CD8-positive, alpha-beta T cell (primary cell): ENCODE measurements at regions of chr22 and their contacts with region 1.

Region 1: DNA sequence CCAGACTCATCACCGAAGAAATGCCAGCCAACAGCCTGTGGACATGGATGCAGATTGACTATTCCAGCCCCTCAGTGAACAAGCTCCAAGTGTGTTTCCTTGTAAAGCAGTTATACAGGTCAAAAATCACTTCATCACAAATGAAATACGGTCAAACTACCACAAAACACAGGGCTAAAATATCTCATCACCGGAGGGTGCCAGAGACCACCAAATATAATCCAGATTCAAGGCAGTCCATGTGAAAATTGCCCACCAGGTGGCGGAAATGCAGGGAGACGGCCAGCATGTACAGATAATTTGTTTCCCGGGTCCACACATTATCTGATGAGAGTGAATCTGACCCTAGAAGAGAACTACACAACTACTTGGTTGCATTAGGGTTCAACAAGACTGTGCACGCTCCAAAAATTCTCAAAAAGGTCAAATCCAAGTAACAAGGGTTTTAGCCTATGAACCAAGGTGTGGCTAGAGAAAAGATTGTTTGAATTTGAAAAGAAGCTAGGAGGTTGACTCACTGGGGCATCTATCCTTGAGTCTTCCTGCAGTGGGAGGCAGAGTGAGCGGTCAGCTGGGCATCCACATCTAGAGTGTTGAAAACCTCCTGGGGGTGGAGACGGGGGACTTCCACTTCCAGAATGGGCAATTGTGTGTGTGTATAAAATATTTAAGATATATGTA is 71.7 kb downstream of the IGLL5 start:
- DNase-seq: peak; percentile 48 to 89 (median 80)
- ATAC-seq: peak; percentile 60
- H3K4me3 ChIP-seq: no peak overlapping the region
- H3K4me3 Mint-ChIP-seq: no peak overlapping the region
- H3K27ac ChIP-seq: no peak overlapping the region
- H3K27ac Mint-ChIP-seq: no peak overlapping the region
- H3K4me1 ChIP-seq: no peaks in the 10 kb centered on the region
- H3K4me1 Mint-ChIP-seq: peaks cover 5% of the 10 kb centered on the region
- H3K27me3 ChIP-seq: no peaks in the 10 kb centered on the region
- H3K27me3 Mint-ChIP-seq: peaks cover 10% of the 10 kb centered on the region
- CTCF ChIP-seq: peak; percentile 98

Region 2: DNA sequence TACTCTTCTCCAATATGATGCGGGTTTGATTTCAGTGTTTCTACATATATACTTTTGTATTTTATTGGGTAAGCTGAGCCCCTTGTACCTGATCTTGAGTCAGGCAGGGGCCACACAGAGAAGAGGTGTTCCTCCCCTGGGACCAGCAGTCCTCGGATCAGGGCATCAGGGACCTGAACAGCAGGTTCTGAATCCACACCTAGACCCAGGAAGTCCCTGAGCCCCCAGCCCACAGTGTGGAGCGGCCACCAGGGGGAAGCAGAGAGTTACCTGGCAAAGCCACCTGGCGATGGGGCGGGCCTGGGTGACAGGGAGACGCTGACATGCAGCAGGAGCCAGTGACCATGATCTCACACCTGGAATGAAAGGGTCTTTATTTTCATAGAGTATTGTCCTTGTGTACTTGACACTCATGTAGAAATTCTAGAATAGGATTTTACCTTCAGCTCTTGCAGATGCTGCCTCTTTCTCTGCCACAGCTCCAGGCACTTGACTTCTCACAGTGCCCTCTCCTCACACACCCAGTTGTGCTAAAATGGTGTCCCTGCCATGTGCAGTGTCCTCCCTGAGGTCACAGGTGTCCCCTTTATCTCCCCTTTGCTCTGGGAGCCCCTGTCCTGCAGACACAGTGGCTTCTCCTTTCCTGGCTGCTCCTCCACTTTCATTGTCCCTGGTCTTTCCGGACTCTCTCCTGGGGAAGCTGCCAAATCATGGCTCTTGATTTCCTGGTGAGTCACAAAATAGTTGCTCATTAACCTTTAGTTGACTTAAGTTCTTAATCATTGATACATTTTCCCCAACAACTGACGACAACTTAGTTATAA is 266.4 kb before region 1 on chr22:
- CTCF ChIA-PET with region 1: interaction called, 47 read pairs
- POLR2A ChIA-PET with region 1: no interaction called
- intact Hi-C with region 1: loop called (anchors 1 to 5 kb)
- DNase-seq: peak; percentile 43 to 79 (median 70)
- ATAC-seq: peak; percentile 78
- H3K4me3 ChIP-seq: no peak overlapping the region
- H3K4me3 Mint-ChIP-seq: no peak overlapping the region
- H3K27ac ChIP-seq: no peak overlapping the region
- H3K27ac Mint-ChIP-seq: no peak overlapping the region
- H3K4me1 ChIP-seq: no peaks in the 10 kb centered on the region
- H3K4me1 Mint-ChIP-seq: no peaks in the 10 kb centered on the region
- H3K27me3 ChIP-seq: no peaks in the 10 kb centered on the region
- H3K27me3 Mint-ChIP-seq: no peaks in the 10 kb centered on the region
- CTCF ChIP-seq: peak; percentile 75

Region 3: GRCh38 chr22:22753526-22754267 is 205.6 kb before region 1 on chr22:
- CTCF ChIA-PET with region 1: interaction called, 56 read pairs
- POLR2A ChIA-PET with region 1: no interaction called
- intact Hi-C with region 1: loop called in 1 of 2 experiments (anchors 1 kb)
- DNase-seq: peak; percentile 63 to 90 (median 83)
- ATAC-seq: peak; percentile 85
- H3K4me3 ChIP-seq: peak overlapping the region in 1 of 2 experiments; percentile 25
- H3K4me3 Mint-ChIP-seq: peak overlapping the region; percentile 60
- H3K27ac ChIP-seq: peak overlapping the region; percentile 44 to 69
- H3K27ac Mint-ChIP-seq: peak overlapping the region; percentile 94
- H3K4me1 ChIP-seq: peaks cover 44% of the 10 kb centered on the region
- H3K4me1 Mint-ChIP-seq: peaks cover 66% of the 10 kb centered on the region
- H3K27me3 ChIP-seq: no peaks in the 10 kb centered on the region
- H3K27me3 Mint-ChIP-seq: no peaks in the 10 kb centered on the region
- CTCF ChIP-seq: peak; percentile 70

Region 4: GRCh38 chr22:22884010-22884887 is 75.0 kb before region 1 on chr22:
- CTCF ChIA-PET with region 1: interaction called, 30 read pairs
- POLR2A ChIA-PET with region 1: no interaction called
- intact Hi-C with region 1: loop called in 1 of 2 experiments (anchors 5 kb)
- DNase-seq: peak; percentile 46 to 86 (median 67)
- ATAC-seq: peak; percentile 78
- H3K4me3 ChIP-seq: no peak overlapping the region
- H3K4me3 Mint-ChIP-seq: no peak overlapping the region
- H3K27ac ChIP-seq: no peak overlapping the region
- H3K27ac Mint-ChIP-seq: no peak overlapping the region
- H3K4me1 ChIP-seq: no peaks in the 10 kb centered on the region
- H3K4me1 Mint-ChIP-seq: no peaks in the 10 kb centered on the region
- H3K27me3 ChIP-seq: no peaks in the 10 kb centered on the region
- H3K27me3 Mint-ChIP-seq: no peaks in the 10 kb centered on the region
- CTCF ChIP-seq: peak; percentile 93

Region 5: DNA sequence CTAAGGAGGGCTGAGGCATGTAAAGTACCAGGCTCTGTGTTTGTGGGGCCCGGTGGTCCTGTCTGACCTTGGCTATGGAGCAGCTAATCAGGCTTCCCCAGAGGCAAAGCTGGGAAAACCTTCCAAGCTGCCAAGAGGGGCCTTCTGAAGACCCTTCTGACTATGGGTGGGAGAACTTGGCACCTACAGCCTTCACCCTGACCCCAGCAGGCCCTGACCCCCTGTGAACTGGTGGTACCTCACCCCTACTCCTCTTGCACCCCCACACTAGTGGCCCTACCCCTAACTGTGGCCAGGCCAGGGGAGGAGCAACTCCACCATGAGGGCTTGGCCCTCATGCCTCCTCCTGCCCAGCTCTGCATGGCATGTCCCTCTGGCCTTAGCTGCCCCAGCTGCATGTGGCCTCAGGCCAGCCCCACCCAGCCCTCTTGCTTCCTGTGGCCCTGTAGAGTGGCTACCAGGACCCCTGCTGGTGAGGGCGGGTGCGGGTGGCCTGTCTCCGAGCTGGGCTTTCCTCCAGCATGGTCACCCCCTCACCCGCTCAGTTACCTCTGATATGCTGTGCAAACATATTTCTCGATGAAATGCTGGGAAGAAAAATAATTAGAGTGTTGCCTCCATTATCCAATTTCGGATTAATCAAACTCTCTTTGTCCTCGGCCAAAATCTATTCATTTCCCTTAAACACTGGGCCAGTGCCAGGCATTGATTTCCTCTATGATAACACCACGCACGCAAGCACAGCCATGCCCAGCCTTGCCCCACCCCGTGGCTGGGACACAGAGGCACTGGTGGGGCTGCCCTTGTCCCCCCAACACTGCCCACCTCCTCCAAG is 118.6 kb after region 1 on chr22:
- CTCF ChIA-PET with region 1: no interaction called
- POLR2A ChIA-PET with region 1: no interaction called
- intact Hi-C with region 1: no loop called
- DNase-seq: no peak
- ATAC-seq: no peak
- H3K4me3 ChIP-seq: no peak overlapping the region
- H3K4me3 Mint-ChIP-seq: no peak overlapping the region
- H3K27ac ChIP-seq: no peak overlapping the region
- H3K27ac Mint-ChIP-seq: no peak overlapping the region
- H3K4me1 ChIP-seq: no peaks in the 10 kb centered on the region
- H3K4me1 Mint-ChIP-seq: no peaks in the 10 kb centered on the region
- H3K27me3 ChIP-seq: no peaks in the 10 kb centered on the region
- H3K27me3 Mint-ChIP-seq: peaks cover 20% of the 10 kb centered on the region
- CTCF ChIP-seq: no peak

Region 6: DNA sequence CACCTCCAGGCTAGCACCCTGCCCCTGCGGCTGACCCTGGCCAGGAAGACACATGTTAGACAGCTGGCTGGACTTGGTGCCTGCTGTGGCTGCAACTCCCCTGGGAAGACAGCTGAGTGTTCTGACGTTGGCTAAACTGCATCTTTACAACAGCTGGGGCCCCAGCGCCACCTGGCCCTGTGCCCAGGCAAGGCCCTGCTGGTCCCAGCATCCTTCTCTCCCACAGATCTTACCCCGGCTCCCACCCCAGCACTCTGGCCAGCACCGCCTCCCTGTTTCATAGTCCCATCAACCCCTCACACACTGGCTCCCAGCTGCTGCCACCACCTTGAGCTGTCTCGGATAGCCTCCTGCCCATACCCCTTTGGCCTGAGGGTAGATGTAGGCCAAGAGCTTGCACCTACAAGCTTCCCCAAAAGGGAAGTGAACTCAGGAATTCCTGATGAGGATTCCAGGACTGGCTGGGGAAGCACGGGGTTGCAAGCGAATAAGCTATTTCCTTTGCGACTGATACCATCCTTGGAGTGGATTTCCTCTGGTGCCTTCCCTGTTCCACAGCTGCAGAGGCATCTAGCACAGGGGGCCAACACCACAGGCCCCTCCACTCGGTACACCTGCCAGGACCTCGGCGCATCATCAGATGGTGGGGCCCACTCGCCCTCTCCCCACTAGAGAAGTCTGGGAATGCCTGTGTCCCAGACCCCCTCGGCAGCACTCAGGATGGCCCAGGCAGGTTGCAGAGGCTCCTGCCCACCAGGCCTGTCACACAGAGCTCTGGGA is 154.0 kb after region 1 on chr22:
- CTCF ChIA-PET with region 1: interaction called, 498 read pairs
- POLR2A ChIA-PET with region 1: no interaction called
- intact Hi-C with region 1: no loop called
- DNase-seq: no peak
- ATAC-seq: no peak
- H3K4me3 ChIP-seq: no peak overlapping the region
- H3K4me3 Mint-ChIP-seq: no peak overlapping the region
- H3K27ac ChIP-seq: no peak overlapping the region
- H3K27ac Mint-ChIP-seq: no peak overlapping the region
- H3K4me1 ChIP-seq: no peaks in the 10 kb centered on the region
- H3K4me1 Mint-ChIP-seq: no peaks in the 10 kb centered on the region
- H3K27me3 ChIP-seq: no peaks in the 10 kb centered on the region
- H3K27me3 Mint-ChIP-seq: no peaks in the 10 kb centered on the region
- CTCF ChIP-seq: no peak

Region 7: DNA sequence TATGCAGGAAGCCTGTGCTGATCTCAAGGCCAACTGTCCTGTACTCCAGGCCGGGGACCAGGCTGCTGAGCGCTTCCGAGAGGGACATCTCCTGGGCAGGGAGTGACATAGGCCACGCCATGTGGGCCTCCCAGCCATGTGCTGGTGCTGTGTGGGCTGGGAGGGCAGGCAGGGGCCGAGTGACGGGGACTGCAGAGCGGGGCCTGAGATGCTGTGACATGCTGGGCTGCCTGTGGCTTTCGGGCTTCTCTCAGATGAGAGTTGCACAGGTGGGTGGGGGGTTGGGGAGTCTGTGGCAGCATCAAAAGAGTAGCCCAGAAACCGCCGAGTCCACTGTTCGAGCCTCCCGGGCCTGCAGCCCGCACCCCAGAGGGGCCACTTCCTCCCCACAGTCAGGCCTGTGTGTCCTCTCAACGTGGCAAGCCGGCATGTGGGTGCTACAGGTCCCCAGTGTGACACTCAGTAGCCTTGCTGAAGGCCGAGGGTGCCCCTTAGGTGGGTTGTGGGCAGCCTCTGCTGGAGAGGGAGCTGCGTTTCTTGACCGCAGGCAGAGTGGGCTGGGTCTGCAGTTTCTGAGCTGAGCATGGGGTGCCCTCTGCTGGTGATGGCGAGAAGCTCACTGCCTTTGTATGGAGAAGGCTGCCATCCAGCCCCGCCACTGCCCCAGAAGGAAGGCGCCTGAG is 322.3 kb after region 1 on chr22:
- CTCF ChIA-PET with region 1: interaction called, 64 read pairs
- POLR2A ChIA-PET with region 1: no interaction called
- intact Hi-C with region 1: loop called (anchors 1 to 2 kb)
- DNase-seq: peak; percentile 60 to 88 (median 85)
- ATAC-seq: peak; percentile 67
- H3K4me3 ChIP-seq: no peak overlapping the region
- H3K4me3 Mint-ChIP-seq: no peak overlapping the region
- H3K27ac ChIP-seq: peak overlapping the region in 1 of 2 experiments; percentile 23
- H3K27ac Mint-ChIP-seq: no peak overlapping the region
- H3K4me1 ChIP-seq: peaks cover 24% of the 10 kb centered on the region
- H3K4me1 Mint-ChIP-seq: peaks cover 20% of the 10 kb centered on the region
- H3K27me3 ChIP-seq: no peaks in the 10 kb centered on the region
- H3K27me3 Mint-ChIP-seq: no peaks in the 10 kb centered on the region
- CTCF ChIP-seq: peak; percentile 94